ENCODE measurements at regions of chr1 and their contacts with region 1.

Region 1: DNA sequence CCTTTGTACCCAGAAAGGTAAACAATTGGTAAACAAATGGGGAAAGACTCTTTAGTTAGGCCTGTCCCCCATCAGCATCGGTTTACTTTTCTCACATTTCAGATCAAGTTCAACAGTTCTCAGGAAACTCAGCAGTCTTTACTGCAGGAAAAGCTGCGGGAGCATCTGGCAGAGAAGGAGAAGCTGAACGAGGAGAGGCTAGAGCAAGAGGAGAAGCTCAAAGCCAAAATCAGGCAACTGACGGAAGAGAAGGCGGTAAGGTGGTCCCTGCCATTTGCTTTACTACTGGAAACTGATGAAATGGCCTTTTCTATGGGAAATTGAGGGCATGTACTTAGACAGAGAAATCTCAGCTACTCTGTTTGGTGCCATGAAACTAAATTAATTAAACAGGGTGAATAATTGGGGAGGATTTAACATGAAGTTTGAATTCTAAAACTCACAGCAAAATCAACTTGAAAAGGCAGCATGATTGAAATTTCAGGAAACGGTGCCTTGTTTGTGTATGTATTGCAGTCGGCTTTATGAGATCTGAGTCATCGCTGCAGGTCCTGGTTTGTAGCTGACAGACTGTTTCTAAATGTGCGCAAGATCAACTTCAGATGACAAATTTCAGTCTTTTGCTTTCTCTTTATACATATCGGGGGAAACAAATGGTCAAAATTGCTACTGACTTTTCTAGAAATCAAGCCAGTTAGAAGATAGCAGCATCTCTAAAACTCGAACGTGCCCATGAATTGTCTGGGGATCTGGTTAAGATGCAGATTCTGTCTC is 67.9 kb upstream of the EFHD2 start:
- DNase-seq: peak; percentile 75
- H3K4me3 Mint-ChIP-seq: no peak overlapping the region
- H3K27ac Mint-ChIP-seq: peak overlapping the region; percentile 71
- H3K4me1 Mint-ChIP-seq: peaks cover 41% of the 10 kb centered on the region
- H3K27me3 Mint-ChIP-seq: no peaks in the 10 kb centered on the region
- CTCF ChIP-seq: no peak

Region 2: DNA sequence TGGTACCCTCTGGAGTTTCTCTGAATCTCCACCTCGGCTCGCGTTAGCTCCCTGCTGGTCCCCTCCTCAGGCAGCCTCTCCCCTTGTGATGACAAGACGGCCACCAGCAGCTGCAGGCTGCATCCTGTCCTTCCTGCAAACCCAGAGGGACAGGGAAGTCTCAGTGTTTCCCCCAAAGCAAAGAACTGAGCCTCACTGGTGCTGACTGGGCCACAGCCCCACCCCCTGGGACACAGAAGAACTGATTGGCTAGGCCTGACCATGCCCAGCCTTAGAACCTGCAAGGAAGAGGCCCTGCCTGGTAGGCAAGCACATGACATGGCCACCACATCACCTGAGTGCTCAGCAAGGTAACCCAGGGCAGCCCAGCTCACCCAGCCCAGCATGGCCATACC is 153.7 kb before region 1 on chr1:
- CTCF ChIA-PET with region 1: no interaction called
- POLR2A ChIA-PET with region 1: no interaction called
- intact Hi-C with region 1: no loop called
- DNase-seq: no peak
- H3K4me3 Mint-ChIP-seq: no peak overlapping the region
- H3K27ac Mint-ChIP-seq: no peak overlapping the region
- H3K4me1 Mint-ChIP-seq: no peaks in the 10 kb centered on the region
- H3K27me3 Mint-ChIP-seq: no peaks in the 10 kb centered on the region
- CTCF ChIP-seq: no peak

Region 3: DNA sequence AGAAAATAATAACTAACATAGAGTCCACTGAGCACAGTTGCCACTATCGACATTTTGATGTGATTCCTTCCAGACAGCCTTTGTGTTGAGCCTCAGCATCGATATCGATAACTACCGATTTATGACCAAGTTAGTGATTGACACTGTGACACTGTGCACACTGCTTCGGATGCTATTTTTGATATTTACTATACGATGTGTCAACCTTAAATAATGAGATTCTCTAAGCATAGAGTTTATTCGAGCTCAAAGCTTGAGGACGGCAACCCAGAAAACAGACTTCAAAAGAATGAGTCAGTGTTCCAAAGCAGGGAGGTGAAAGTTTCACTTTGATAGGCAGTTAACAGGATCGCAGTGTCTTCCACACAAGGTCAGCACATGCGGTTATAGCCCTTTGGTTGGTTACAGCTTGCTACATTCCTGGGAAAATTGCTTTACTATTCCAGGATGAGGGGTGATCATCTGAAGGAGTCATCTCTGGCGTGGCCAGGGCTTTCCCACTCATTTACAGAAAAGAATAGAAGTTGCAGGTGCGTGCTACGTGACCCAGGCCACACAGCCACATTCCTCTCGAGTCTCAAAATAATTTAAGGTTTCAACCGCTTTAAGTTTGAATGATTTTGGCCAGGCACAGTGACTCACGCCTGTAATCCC is 14.3 kb after region 1 on chr1:
- CTCF ChIA-PET with region 1: no interaction called
- POLR2A ChIA-PET with region 1: interaction called, 23 read pairs
- intact Hi-C with region 1: no loop called
- DNase-seq: peak; percentile 86
- H3K4me3 Mint-ChIP-seq: peak overlapping the region; percentile 40
- H3K27ac Mint-ChIP-seq: peak overlapping the region; percentile 86
- H3K4me1 Mint-ChIP-seq: peaks cover 49% of the 10 kb centered on the region
- H3K27me3 Mint-ChIP-seq: no peaks in the 10 kb centered on the region
- CTCF ChIP-seq: no peak

Region 4: GRCh38 chr1:15400627-15401026 is 58.8 kb after region 1 on chr1:
- CTCF ChIA-PET with region 1: no interaction called
- POLR2A ChIA-PET with region 1: interaction called, 13 read pairs
- intact Hi-C with region 1: no loop called
- DNase-seq: peak; percentile 95
- H3K4me3 Mint-ChIP-seq: no peak overlapping the region
- H3K27ac Mint-ChIP-seq: no peak overlapping the region
- H3K4me1 Mint-ChIP-seq: peaks cover 14% of the 10 kb centered on the region
- H3K27me3 Mint-ChIP-seq: no peaks in the 10 kb centered on the region
- CTCF ChIP-seq: no peak

Region 5: GRCh38 chr1:15417365-15417934 is 75.6 kb after region 1 on chr1:
- CTCF ChIA-PET with region 1: no interaction called
- POLR2A ChIA-PET with region 1: interaction called, 5 read pairs
- intact Hi-C with region 1: loop called (anchors 5 kb)
- DNase-seq: peak; percentile 91
- H3K4me3 Mint-ChIP-seq: peak overlapping the region; percentile 47
- H3K27ac Mint-ChIP-seq: peak overlapping the region; percentile 79
- H3K4me1 Mint-ChIP-seq: peaks cover 34% of the 10 kb centered on the region
- H3K27me3 Mint-ChIP-seq: no peaks in the 10 kb centered on the region
- CTCF ChIP-seq: no peak

Region 6: DNA sequence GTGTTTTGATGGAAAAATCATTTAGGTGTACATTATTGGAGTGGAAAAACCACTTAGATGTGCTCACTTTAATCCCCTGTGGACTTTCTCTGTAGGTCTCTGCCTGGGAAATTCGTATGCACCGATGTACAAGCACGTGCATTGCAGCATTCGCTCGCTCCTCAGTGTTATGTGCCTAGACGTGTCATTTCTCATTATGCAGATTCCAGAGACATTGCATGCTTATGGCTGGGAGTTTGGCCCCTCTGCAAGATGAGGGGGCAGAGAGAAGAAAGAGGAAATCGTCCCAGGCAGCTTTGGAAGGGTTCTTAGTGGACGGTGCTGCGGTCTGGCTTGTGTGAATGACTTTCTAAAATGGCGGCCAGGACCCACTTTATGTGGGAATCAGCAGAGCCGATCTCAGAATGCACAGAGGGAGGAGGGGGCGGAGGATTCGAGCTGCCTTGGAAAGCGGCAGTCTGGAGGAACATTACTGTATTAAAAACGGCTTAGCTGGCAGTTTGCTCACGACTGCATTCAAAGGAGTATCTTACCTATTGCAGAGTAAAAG is 508.0 kb after region 1 on chr1:
- CTCF ChIA-PET with region 1: no interaction called
- POLR2A ChIA-PET with region 1: no interaction called
- intact Hi-C with region 1: no loop called
- DNase-seq: peak; percentile 73
- H3K4me3 Mint-ChIP-seq: peak overlapping the region; percentile 82
- H3K27ac Mint-ChIP-seq: peak overlapping the region; percentile 97
- H3K4me1 Mint-ChIP-seq: peaks cover 23% of the 10 kb centered on the region
- H3K27me3 Mint-ChIP-seq: no peaks in the 10 kb centered on the region
- CTCF ChIP-seq: no peak

Measured in MCF 10A (cell line).